ENCODE measurements at regions of chr11 and their contacts with region 1.

Region 1: GRCh38 chr11:85647604-85648299 is at the start of gene TMEM126A:
- DNase-seq: peak; percentile 98
- ATAC-seq: peak; percentile 91
- H3K4me3 ChIP-seq: peak within 1 kb of the TSS; percentile 76
- H3K27ac ChIP-seq: peak within 1 kb of the TSS; percentile 79
- H3K4me1 ChIP-seq: peaks cover 25% of the 10 kb centered on the region
- H3K27me3 ChIP-seq: no peaks in the 10 kb centered on the region
- CTCF ChIP-seq: no peak
- total RNA-seq, gene TMEM126A: 34.0 and 37.8 TPM in 2 replicates

Region 2: DNA sequence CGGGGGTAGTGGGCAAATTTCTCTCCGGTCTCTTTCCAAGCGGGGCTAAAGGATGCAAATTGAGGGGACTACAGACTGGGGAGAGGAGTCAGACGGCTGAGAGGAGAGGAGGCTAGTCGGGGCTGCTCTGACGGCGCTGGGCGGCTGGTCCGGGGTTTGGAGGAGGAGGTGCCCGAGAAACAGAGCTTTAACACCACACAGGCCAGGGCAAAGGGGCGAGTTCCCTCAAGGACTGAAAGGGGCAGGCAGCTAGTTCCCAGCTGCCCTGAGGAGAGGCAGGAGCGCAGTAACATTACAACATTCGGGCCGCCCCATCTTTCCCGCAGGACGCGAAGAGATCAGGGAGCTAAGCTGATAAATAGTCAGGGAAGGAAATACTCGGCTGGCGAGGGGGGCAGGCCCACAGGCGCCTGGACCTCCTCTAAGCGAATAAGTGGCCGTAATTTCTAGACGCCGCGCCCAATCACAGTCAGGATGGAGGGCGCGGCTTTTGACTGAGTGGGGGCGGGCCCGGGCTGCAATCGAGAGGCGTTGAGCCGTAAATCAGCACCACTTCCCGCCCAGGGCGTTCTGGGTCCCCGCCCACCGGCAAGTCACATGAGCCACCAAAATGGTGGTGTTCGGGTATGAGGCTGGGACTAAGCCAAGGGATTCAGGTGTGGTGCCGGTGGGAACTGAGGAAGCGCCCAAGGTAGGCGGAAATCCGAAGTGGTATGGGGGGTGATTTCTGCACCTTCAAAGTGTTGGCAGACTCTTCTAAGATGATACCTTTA is 19.6 kb before region 1 on chr11 and contains the start of gene TMEM126B:
- CTCF ChIA-PET with region 1: no interaction called
- POLR2A ChIA-PET with region 1: interaction called, 8 read pairs
- intact Hi-C with region 1: loop called (anchors 1 kb)
- DNase-seq: peak; percentile 99
- ATAC-seq: peak; percentile 97
- H3K4me3 ChIP-seq: peak within 1 kb of the TSS; percentile 83
- H3K27ac ChIP-seq: peak within 1 kb of the TSS; percentile 30
- H3K4me1 ChIP-seq: peaks cover 25% of the 10 kb centered on the region
- H3K27me3 ChIP-seq: no peaks in the 10 kb centered on the region
- CTCF ChIP-seq: no peak
- total RNA-seq, gene TMEM126B: 62.1 and 79.5 TPM in 2 replicates

Region 3: GRCh38 chr11:85658180-85658579 is 10.4 kb after region 1 on chr11:
- CTCF ChIA-PET with region 1: no interaction called
- POLR2A ChIA-PET with region 1: interaction called, 10 read pairs
- intact Hi-C with region 1: loop called (anchors 1 kb)
- DNase-seq: no peak
- ATAC-seq: no peak
- H3K4me3 ChIP-seq: no peak overlapping the region
- H3K27ac ChIP-seq: no peak overlapping the region
- H3K4me1 ChIP-seq: peaks cover 31% of the 10 kb centered on the region
- H3K27me3 ChIP-seq: no peaks in the 10 kb centered on the region
- CTCF ChIP-seq: no peak